Activated naive CD4-positive, alpha-beta T cell treated with anti-CD3 and anti-CD28 coated beads for 36 hours (primary cell): ENCODE measurements at regions of chr2 and their contacts with region 1.

Region 1: DNA sequence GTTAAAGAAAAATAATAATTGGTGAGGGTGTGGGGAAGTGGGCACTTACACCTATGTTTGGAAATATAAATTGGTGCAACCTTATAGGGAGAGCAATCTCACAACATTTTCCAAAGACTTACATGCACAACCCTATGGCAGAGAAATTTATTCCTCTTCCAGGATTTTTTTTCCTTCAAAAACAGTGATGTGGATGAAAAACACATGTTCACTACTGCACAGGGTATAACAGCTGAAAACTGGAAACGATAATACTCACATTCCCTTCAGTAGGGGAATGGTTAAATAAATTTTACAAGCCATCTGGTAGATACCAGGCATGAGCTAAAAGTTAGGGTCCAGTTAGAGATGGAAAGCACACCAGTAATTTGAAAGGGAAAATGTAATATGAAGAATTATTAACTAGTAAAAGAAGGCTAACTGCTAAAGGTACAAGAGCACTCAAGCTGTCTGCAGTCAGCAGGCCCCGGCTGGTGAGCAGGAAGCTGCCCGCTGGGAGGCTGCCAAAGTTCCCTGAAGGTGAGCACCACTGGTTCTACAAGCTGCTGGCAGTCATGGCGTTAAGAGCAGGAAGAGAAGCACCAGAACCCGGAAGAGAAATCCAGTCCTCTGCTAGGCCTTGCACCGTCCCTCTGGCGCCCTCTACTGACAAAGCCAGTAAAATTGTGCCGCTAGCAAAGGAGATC is 28.4 kb upstream of the CASP8 start:
- DNase-seq: peak; percentile 98
- H3K4me3 Mint-ChIP-seq: peak overlapping the region; percentile 71
- H3K27ac Mint-ChIP-seq: peak overlapping the region; percentile 84
- H3K4me1 Mint-ChIP-seq: peaks cover 51% of the 10 kb centered on the region
- H3K27me3 Mint-ChIP-seq: no peaks in the 10 kb centered on the region

Region 2: DNA sequence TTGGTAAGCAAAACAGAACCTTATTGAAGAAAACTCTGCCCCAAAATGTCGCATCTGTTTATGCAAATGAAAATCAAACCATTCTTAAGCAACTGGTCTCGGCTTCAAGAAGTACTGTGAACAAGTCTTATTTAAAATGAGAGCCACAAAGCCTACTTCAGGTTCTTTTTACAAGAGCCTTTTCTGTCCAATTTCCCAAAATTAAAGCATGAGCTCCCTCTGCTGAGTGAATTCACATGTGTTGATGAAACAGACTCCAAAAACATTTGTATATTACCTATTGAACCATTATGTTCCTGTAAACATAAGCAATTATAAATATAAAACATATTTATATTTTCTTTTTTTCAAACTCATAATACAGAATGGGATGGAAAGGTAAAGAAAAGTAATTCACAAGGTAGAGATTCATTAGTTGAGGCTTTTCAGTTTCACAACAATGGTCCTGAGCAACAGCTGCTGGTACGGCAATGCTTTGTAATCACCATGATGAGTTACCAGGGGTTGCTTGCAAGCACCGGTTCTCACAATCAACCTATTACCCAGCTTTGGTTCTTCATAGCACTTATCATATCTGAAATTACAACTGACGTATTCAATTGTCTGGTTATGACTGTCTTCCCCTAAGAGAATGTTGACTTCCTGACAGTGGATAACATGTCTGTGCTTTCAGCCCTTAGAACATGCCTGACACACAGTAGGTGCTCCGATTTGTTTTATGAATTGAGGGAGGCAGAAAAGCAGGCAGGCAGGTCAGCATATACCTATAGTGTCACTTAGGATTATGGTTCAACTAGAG is 528.6 kb before region 1 on chr2:
- CTCF ChIA-PET with region 1: no interaction called
- intact Hi-C with region 1: loop called (anchors 2 kb)
- DNase-seq: peak; percentile 68
- H3K4me3 Mint-ChIP-seq: peak overlapping the region; percentile 19
- H3K27ac Mint-ChIP-seq: peak overlapping the region; percentile 83
- H3K4me1 Mint-ChIP-seq: peaks cover 55% of the 10 kb centered on the region
- H3K27me3 Mint-ChIP-seq: peaks cover 1% of the 10 kb centered on the region

Region 3: DNA sequence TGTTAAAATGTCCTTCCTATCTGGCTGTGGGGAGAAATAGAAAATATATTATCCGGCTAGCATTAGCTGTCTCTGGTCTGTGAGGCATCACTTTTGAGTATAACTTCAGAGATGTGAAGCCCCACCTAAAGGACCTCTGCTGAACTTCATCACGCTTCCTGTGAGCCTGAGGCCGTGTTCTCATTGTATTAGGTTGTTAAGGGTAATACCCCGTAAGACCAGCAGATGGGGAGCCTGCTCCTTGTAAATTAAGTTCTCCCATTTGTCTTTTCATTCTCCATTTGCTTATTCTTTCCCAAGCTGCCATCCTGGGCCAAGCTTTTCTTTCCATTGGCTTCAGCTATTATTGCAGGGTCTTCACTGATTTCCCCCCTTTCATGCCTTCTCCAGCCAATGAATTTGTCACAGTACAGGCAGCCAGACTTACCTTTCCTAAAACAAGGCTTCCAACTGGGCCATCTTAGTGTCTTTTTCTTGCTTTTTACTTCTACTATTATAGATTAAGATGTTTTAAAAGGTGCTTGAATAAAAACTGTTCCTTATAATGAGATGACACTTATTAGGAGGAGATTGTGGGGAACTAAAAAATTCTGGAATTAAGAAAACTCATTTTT is 330.4 kb before region 1 on chr2:
- CTCF ChIA-PET with region 1: interaction called, 18 read pairs
- intact Hi-C with region 1: loop called (anchors 1 kb)
- DNase-seq: peak; percentile 89
- H3K4me3 Mint-ChIP-seq: no peak overlapping the region
- H3K27ac Mint-ChIP-seq: peak overlapping the region; percentile 84
- H3K4me1 Mint-ChIP-seq: peaks cover 7% of the 10 kb centered on the region
- H3K27me3 Mint-ChIP-seq: no peaks in the 10 kb centered on the region

Region 4: DNA sequence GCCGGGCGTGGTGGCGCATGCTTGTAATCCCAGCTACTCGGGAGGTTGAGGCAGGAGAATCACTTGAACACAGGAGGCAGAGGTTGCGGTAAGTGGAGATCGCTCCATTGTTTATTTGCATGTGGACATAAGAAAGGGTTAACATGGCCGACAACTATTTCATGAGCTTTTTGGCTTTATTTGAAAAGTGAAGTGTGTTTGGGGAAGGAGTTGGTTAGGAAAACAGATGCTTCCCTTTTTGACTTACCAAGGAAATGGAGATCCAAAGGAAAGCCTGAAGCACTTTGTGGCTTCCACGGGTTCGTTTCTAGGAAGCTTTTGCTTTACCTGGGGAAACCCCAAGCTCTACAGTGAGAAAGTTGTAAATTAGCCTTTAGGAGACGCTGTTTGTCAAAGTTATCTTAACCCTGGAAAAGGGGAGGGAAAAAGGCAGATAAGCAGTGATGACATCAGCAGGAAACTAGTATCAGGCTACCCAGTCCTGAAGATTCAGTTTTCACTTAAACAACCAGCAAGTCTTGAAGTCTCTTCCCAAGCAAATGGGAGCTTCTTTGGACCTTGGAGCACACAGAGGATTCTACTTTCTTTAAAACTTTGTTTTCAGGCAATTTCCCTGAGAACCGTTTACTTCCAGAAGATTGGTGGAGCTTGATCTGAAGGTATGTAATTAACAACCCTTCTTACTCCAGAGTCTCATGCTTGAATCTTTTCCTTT is 49.1 kb before region 1 on chr2 and contains the start of gene CASP10:
- CTCF ChIA-PET with region 1: interaction called, 182 read pairs
- intact Hi-C with region 1: loop called (anchors 1 kb)
- DNase-seq: peak; percentile 32
- H3K4me3 Mint-ChIP-seq: peak within 1 kb of the TSS; percentile 97
- H3K27ac Mint-ChIP-seq: peak within 1 kb of the TSS; percentile 96
- H3K4me1 Mint-ChIP-seq: peaks cover 39% of the 10 kb centered on the region
- H3K27me3 Mint-ChIP-seq: no peaks in the 10 kb centered on the region
- total RNA-seq, gene CASP10: 22.0 to 22.1 TPM

Region 5: DNA sequence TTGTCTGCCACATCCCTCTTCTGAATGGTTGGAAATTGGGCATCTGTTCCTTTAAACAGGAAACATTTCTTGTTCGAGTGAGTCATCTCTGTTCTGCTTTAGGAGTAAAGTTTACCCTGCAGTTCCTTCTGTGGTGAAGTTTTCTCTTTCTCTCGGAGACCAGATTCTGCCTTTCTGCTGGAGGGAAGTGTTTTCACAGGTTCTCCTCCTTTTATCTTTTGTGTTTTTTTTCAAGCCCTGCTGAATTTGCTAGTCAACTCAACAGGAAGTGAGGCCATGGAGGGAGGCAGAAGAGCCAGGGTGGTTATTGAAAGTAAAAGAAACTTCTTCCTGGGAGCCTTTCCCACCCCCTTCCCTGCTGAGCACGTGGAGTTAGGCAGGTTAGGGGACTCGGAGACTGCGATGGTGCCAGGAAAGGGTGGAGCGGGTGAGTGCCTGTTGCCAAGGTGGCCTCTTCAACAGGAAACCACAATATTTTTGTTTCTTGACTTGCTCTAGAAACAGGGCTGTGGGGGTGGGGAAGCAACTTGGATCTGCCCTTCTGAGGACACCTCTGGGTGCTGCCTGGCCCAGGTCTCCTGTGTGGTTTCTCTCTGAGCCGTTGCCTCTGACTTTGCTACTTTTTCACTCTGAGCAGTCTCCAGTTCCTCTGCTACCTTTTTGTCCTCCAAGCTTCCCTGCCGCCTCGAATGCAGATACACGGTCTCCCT is 26.2 kb after region 1 on chr2:
- CTCF ChIA-PET with region 1: interaction called, 68 read pairs
- intact Hi-C with region 1: loop called (anchors 1 kb)
- DNase-seq: peak; percentile 98
- H3K4me3 Mint-ChIP-seq: peak overlapping the region; percentile 78
- H3K27ac Mint-ChIP-seq: peak overlapping the region; percentile 97
- H3K4me1 Mint-ChIP-seq: peaks cover 71% of the 10 kb centered on the region
- H3K27me3 Mint-ChIP-seq: no peaks in the 10 kb centered on the region

Region 6: DNA sequence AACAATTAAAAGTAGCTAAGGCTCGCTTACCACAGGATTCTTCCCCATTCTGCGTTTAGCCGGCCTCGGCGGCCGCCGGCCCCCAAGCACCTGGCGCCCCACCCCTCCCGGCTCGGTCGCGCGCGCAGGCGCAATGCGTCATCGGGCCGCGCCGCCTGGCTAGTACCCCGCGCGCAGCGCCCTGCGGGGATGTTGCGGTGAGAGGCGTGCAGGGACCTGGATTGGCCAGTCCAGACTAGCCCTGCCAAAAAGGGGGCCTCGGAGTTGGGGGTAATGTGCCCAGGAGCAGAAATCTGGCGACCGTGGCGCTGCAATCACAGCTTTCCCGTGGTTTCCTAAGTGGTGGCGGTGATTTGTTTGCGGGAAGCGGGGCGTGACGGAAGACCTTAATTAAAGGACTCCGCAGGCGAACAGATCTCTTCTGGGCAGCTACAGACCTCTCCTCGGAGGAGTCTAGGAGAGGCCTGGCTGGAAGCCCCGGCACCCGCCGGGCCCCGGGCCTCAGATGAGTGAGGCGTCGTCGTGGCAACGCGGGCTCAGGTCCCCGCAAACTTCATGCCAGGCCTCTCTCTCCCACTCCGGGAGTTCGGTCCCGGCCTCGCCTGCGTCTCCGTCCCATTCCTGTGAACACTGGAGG is 410.8 kb after region 1 on chr2:
- CTCF ChIA-PET with region 1: no interaction called
- intact Hi-C with region 1: loop called (anchors 1 kb)
- DNase-seq: peak; percentile 87
- H3K4me3 Mint-ChIP-seq: peak overlapping the region; percentile 79
- H3K27ac Mint-ChIP-seq: peak overlapping the region; percentile 79
- H3K4me1 Mint-ChIP-seq: peaks cover 11% of the 10 kb centered on the region
- H3K27me3 Mint-ChIP-seq: no peaks in the 10 kb centered on the region